ENCODE measurements at regions of chr3 and their contacts with region 1.

Region 1: DNA sequence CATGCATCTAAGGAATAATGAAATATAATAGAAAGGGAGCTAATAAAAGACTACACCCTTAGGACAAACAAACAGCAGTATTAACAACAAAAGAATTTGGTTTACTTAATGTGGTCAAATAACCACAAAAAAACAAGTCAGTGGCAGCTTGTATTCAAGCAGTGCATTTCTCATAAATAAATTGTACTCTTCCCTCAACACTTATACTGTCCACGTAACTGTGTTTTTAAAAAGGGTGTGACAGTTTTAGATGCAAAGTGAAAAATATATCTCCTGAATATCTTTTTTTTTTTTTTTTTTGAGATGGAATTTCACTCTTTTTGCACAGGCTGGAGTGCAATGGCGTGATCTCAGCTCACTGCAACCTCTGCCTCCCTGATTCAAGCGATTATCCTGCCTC is 698.2 kb upstream of the CADM2 start:
- DNase-seq: peak; percentile 46
- ATAC-seq: peak; percentile 83
- H3K4me3 ChIP-seq: no peak overlapping the region
- H3K27ac ChIP-seq: peak overlapping the region; percentile 34; the same call in 1 of the 2 replicates
- H3K4me1 ChIP-seq: peaks cover 11% of the 10 kb centered on the region
- H3K27me3 ChIP-seq: no peaks in the 10 kb centered on the region
- CTCF ChIP-seq: no peak

Region 2: DNA sequence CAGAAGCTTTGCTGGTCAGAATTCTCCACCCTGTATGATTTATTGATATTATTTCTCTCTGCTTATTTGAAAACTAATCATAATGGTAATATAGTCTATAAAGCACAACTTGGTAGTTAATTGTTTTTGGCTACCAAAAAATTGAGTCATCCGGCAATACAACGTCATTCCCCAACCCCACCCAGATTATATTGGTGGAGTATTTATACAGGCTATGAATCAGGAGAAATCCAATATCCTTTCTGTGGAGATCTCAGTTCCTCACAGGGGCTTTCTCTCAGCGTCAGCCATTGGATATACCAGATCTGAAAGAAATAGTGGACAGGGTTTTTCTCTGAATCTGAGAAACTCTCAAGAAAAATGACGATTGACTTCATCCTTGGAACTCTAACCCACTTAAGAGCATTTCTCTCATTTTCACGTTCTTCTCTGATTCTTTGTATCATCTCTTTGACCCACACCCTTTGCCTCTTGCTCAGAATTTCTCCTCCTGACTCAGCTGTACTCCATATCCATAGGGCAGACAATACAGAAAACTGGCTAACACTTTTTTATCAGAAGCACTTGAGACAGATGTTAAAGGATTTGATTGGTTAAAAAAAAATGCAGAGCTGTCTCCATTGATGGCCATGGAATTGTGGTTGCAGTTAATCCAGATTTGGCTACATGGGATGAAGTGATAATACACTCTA is 357.6 kb before region 1 on chr3:
- CTCF ChIA-PET with region 1: no interaction called
- POLR2A ChIA-PET with region 1: interaction called, 11 read pairs
- intact Hi-C with region 1: no loop called
- DNase-seq: peak; percentile 75
- ATAC-seq: peak; percentile 82
- H3K4me3 ChIP-seq: no peak overlapping the region
- H3K27ac ChIP-seq: peak overlapping the region; percentile 87
- H3K4me1 ChIP-seq: peaks cover 17% of the 10 kb centered on the region
- H3K27me3 ChIP-seq: no peaks in the 10 kb centered on the region
- CTCF ChIP-seq: no peak